ENCODE measurements at regions of chr10 and their contacts with region 1.

Region 1: DNA sequence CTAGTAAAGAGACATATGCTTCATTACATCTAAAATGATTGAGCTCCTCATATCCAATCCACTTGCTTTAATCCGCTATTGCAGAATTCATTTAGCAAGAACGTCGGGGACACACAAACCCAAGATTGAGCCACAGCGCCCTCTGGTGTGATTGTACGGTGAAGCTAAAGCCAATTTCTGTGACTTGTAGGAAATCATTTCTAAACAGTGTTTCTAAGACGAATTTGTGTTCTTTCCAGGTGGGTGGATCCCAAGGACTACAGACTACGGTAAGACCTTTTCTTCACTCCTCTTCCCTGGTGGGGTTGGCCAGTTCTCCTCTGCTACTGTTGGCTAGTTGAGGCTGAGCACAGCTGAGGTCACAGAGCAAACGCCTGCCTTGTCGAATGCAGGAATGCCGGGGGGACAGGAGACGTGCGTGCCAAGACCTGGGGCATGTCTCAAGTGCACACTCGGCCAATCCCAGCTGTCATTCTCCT is 5.2 kb downstream of the DMBT1 start:
- DNase-seq: peak; percentile 89
- H3K4me3 ChIP-seq: no peak overlapping the region
- H3K27ac ChIP-seq: no peak overlapping the region
- H3K4me1 ChIP-seq: no peaks in the 10 kb centered on the region
- H3K27me3 ChIP-seq: peaks cover 19% of the 10 kb centered on the region in 2 experiments
- CTCF ChIP-seq: peak; percentile 71 to 76
- POLR2A ChIP-seq: no peak

Region 2: DNA sequence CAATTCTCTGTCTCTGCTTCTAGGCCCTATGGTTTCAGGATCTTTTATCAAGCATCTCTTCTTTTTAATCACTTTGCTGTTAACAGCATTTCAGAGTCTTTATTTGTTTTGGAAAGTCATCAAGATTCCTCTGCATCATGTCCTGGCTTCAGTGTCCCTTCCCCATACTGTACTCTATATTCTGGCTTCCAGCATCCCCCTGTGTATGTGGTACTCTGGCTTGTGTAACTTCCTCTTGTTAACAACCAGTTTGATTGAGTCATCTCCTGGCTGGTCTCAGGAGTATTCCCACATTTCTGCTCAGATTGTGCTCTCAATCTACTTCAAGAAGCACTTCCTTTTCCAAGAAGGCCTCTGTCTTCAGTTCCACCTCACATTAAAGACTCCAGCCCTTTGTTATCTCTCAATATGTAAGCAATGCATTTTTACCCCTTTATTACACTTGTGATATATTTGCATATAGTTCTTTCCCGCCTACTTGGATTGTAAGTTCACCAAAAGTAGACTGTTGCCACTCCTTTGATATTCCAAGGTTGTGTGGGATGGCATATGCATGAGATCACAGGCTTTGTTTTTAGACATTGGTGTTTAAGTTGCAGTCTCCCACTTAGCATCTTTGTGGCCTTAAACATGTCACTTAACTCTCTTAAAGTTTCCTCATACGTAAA is 622.9 kb before region 1 on chr10:
- CTCF ChIA-PET with region 1: no interaction called
- POLR2A ChIA-PET with region 1: no interaction called
- dilution Hi-C with region 1: no loop called
- intact Hi-C with region 1: no loop called
- DNase-seq: peak; percentile 97
- H3K4me3 ChIP-seq: no peak overlapping the region
- H3K27ac ChIP-seq: peak overlapping the region; percentile 69
- H3K4me1 ChIP-seq: peaks cover 23% of the 10 kb centered on the region
- H3K27me3 ChIP-seq: no peaks in the 10 kb centered on the region
- CTCF ChIP-seq: no peak
- POLR2A ChIP-seq: no peak

Region 3: DNA sequence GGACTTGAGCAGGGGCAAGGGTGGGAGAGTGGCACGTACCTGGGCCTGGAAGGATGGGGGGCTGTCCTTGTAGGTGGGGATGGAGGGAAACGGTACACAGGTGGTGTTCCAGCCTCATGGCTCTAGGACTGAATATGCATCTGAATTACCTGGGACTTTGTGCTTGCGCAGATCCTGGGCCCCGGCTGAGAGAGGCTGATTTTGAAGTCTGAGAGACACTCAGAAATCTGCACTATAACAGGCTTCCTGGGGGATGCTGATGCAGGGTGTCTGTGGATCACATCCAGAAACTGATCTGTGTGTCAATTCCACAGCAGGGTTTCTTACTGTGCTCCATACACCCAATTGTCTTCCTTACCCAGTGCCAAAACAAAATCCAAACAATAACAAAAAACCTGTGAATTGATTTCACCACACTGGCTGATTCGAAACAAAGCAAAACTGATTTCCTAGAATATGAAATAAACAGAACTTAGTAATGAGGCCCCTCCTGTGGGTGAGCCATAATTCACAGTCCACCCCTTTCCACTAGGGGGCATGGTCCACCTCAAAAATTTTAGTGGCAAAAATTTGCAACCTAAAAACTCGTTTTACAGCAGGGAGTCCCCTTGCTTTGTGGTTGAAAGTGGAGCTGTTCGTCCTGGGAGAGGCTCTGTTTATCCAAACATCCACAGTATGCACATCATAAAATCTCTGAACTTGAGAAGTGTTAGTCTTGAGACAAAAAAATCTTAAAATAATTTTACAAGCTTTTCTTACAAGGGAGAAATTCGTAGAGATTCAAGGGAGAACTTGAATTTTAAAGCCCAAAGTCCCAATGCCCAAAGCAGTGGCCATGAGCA is 223.3 kb before region 1 on chr10:
- CTCF ChIA-PET with region 1: interaction called, 41 read pairs
- POLR2A ChIA-PET with region 1: no interaction called
- dilution Hi-C with region 1: no loop called
- intact Hi-C with region 1: loop called (anchors 1 kb)
- DNase-seq: peak; percentile 71
- H3K4me3 ChIP-seq: no peak overlapping the region
- H3K27ac ChIP-seq: no peak overlapping the region
- H3K4me1 ChIP-seq: no peaks in the 10 kb centered on the region
- H3K27me3 ChIP-seq: no peaks in the 10 kb centered on the region
- CTCF ChIP-seq: peak; percentile 64 to 84
- POLR2A ChIP-seq: no peak

Region 4: DNA sequence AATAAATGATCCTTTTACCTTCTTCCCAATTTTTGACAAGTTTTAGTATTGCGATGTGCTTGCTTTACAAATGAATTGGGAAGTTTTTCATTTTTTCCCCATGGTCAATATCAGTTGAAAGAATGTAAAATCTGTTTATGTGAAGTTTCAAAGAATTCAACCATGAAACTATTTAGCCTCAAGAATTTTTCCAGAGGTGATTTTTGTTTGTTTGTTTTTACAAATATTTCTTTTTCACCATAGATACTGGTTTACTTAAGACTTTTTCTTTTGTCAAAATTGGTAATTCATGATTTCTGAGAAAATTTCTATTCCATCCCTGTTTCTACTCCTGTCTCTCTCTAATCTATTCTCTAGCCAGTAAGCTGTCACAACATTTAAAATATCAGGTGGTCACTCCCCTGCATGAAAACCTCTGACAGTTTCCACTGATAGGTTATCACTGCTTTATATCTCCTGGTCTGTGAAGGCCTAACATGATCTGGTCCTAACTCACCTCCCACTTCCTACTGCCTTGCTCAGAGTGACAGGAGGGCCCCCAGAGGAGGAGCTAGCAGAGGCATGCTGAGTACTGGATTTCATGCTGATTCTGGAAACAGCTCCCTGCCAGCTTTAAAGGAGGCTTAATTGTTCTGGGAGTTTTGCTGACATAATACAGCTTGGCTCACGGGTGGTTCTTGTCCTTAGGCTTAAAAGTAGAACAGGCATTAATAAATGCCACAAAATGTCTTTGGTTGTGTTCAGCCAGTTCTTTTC is 118.9 kb before region 1 on chr10:
- CTCF ChIA-PET with region 1: interaction called, 15 read pairs
- POLR2A ChIA-PET with region 1: no interaction called
- dilution Hi-C with region 1: no loop called
- intact Hi-C with region 1: loop called (anchors 2 kb)
- DNase-seq: no peak
- H3K4me3 ChIP-seq: no peak overlapping the region
- H3K27ac ChIP-seq: no peak overlapping the region
- H3K4me1 ChIP-seq: peaks cover 23% of the 10 kb centered on the region
- H3K27me3 ChIP-seq: no peaks in the 10 kb centered on the region
- CTCF ChIP-seq: no peak
- POLR2A ChIP-seq: no peak

Region 5: DNA sequence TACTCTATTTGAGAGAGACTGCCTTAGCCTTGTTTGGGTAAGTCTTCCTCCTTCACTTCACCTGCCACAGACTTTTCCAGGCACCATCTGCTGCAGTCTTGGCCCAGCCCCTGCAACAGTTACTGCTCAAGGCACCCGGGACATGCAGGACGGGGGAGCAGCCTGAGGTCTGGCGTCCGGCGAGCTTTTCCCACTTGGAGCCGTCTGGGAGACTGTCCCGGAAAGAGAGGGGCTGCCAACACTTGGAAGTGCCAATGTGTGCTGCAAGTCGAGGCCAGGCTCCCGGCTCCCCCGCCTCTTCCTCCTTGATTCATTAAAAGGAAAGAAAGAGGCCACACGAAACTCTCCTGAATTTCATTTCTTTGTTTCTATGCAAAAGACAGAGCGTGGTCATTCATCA is 90.7 kb before region 1 on chr10:
- CTCF ChIA-PET with region 1: interaction called, 15 read pairs
- POLR2A ChIA-PET with region 1: no interaction called
- dilution Hi-C with region 1: no loop called
- intact Hi-C with region 1: loop called (anchors 1 kb)
- DNase-seq: peak; percentile 69
- H3K4me3 ChIP-seq: peak overlapping the region in 1 of 3 experiments; percentile 15
- H3K27ac ChIP-seq: peak overlapping the region; percentile 97
- H3K4me1 ChIP-seq: peaks cover 38% of the 10 kb centered on the region
- H3K27me3 ChIP-seq: no peaks in the 10 kb centered on the region
- CTCF ChIP-seq: no peak
- POLR2A ChIP-seq: no peak

Region 6: GRCh38 chr10:122515588-122516231 is 50.1 kb before region 1 on chr10:
- CTCF ChIA-PET with region 1: interaction called, 85 read pairs
- POLR2A ChIA-PET with region 1: no interaction called
- dilution Hi-C with region 1: no loop called
- intact Hi-C with region 1: no loop called
- DNase-seq: no peak
- H3K4me3 ChIP-seq: no peak overlapping the region
- H3K27ac ChIP-seq: no peak overlapping the region
- H3K4me1 ChIP-seq: no peaks in the 10 kb centered on the region
- H3K27me3 ChIP-seq: no peaks in the 10 kb centered on the region
- CTCF ChIP-seq: no peak
- POLR2A ChIP-seq: no peak

Region 7: GRCh38 chr10:122703439-122704118 is 137.8 kb after region 1 on chr10:
- CTCF ChIA-PET with region 1: interaction called, 4 read pairs
- POLR2A ChIA-PET with region 1: no interaction called
- dilution Hi-C with region 1: no loop called
- intact Hi-C with region 1: loop called (anchors 1 kb)
- DNase-seq: peak; percentile 55
- H3K4me3 ChIP-seq: no peak overlapping the region
- H3K27ac ChIP-seq: no peak overlapping the region
- H3K4me1 ChIP-seq: no peaks in the 10 kb centered on the region
- H3K27me3 ChIP-seq: peaks cover 0 to 2% of the 10 kb centered on the region in 2 experiments
- CTCF ChIP-seq: peak; percentile 74 to 90
- POLR2A ChIP-seq: no peak

Region 8: GRCh38 chr10:122854648-122855047 is 288.9 kb after region 1 on chr10:
- CTCF ChIA-PET with region 1: no interaction called
- POLR2A ChIA-PET with region 1: no interaction called
- dilution Hi-C with region 1: no loop called
- intact Hi-C with region 1: no loop called
- DNase-seq: peak; percentile 54
- H3K4me3 ChIP-seq: no peak overlapping the region
- H3K27ac ChIP-seq: peak overlapping the region; percentile 73
- H3K4me1 ChIP-seq: peaks cover 61% of the 10 kb centered on the region
- H3K27me3 ChIP-seq: no peaks in the 10 kb centered on the region
- CTCF ChIP-seq: no peak
- POLR2A ChIP-seq: no peak

Region 9: GRCh38 chr10:122999347-122999746 is 433.6 kb after region 1 on chr10:
- CTCF ChIA-PET with region 1: no interaction called
- POLR2A ChIA-PET with region 1: no interaction called
- dilution Hi-C with region 1: no loop called
- intact Hi-C with region 1: no loop called
- DNase-seq: no peak
- H3K4me3 ChIP-seq: no peak overlapping the region
- H3K27ac ChIP-seq: no peak overlapping the region
- H3K4me1 ChIP-seq: peaks cover 4% of the 10 kb centered on the region
- H3K27me3 ChIP-seq: no peaks in the 10 kb centered on the region
- CTCF ChIP-seq: no peak
- POLR2A ChIP-seq: no peak